GM12878 (cell line): ENCODE measurements at regions of chr15 and their contacts with region 1.

Region 1: DNA sequence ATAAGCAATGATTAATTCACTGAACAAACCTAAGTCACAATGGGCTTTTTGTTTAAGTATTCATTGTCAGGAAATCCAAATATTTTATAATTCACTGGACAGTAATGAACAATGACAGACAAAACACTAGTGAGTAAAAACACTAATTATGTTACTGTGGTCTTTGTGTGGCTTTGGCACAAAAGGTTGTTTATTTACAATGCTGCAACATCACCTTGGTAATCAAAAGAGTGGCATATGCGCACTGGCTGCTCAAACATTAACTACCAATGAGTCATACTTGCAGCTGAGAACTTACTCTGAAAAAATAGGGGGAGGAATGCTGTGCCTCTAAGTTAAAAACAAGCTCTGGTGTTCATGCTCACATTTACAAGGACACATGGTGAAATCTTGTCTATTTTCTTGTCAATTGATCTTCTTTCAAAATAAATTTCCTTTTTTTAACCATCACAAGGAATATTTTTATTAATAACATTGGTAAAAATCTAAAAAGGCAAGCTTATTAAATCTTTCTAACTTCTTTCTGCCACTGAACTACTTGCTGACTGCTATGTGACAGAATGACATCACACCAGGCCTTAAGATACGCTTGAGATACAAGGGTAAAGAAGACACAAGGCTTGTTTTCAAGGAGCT is 85.2 kb upstream of the PPIB start:
- DNase-seq: peak; percentile 75
- ATAC-seq: peak; percentile 82
- H3K4me3 ChIP-seq: no peak overlapping the region
- H3K27ac ChIP-seq: no peak overlapping the region
- H3K4me1 ChIP-seq: peaks cover 23% of the 10 kb centered on the region
- H3K27me3 ChIP-seq: no peaks in the 10 kb centered on the region
- CTCF ChIP-seq: no peak
- EP300 ChIP-seq: peak; percentile 97 to 98
- POLR2A ChIP-seq: no peak
- RAD21 ChIP-seq: no peak

Region 2: GRCh38 chr15:64232400-64232799 is 15.6 kb before region 1 on chr15:
- CTCF ChIA-PET with region 1: interaction called, 17 read pairs
- POLR2A ChIA-PET with region 1: interaction called, 5 read pairs
- RAD21 ChIA-PET with region 1: interaction called, 3 read pairs
- SMC1A ChIA-PET with region 1: interaction called, 47 read pairs
- in situ Hi-C with region 1: no loop called
- intact Hi-C with region 1: no loop called
- DNase-seq: no peak
- ATAC-seq: peak; percentile 31; the same call in 1 of the 3 replicates
- H3K4me3 ChIP-seq: no peak overlapping the region
- H3K27ac ChIP-seq: no peak overlapping the region
- H3K4me1 ChIP-seq: no peaks in the 10 kb centered on the region
- H3K27me3 ChIP-seq: no peaks in the 10 kb centered on the region
- CTCF ChIP-seq: no peak
- EP300 ChIP-seq: no peak
- POLR2A ChIP-seq: no peak
- RAD21 ChIP-seq: no peak

Region 3: DNA sequence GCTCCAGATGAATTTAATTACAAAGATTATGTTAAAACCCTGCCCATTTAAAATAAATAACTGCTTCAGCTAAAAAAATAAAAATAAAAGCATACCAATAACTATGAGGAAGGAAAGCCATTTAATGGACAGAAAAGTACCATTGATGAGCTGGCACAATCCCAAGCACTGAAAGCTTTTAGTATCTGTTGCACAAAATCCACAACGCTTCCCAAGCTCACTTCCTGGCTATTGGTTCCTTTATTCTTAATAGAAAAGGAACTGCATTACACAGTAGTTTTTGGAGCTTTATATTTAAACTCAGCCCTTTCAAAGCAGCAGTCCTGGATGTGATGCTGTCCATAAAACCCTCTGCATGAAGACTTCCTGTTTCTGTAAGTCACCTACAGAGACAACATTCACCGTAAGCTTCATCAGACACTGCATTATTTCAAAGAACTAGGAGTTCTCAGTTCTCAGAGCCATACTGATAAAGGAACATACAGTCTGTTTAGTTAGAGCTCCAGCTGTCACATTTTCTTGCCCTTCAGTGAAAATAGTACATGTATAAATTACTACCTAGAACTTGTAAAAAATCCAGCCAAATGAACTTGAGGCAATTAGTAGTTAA is 26.4 kb after region 1 on chr15:
- CTCF ChIA-PET with region 1: no interaction called
- POLR2A ChIA-PET with region 1: interaction called, 6 read pairs
- RAD21 ChIA-PET with region 1: interaction called, 4 read pairs
- SMC1A ChIA-PET with region 1: interaction called, 11 read pairs
- in situ Hi-C with region 1: no loop called
- intact Hi-C with region 1: no loop called
- DNase-seq: no peak
- ATAC-seq: peak; percentile 54
- H3K4me3 ChIP-seq: no peak overlapping the region
- H3K27ac ChIP-seq: no peak overlapping the region
- H3K4me1 ChIP-seq: no peaks in the 10 kb centered on the region
- H3K27me3 ChIP-seq: no peaks in the 10 kb centered on the region
- CTCF ChIP-seq: no peak
- EP300 ChIP-seq: no peak
- POLR2A ChIP-seq: no peak
- RAD21 ChIP-seq: no peak